Esophagus muscularis mucosa (tissue), 4 donors: ENCODE measurements at regions of chr20 and their contacts with region 1.

Region 1: GRCh38 chr20:41232973-41233926 is 84.3 kb downstream of the ZHX3 start:
- DNase-seq: no peak
- H3K4me3 ChIP-seq: no peak overlapping the region
- H3K27ac ChIP-seq: peak overlapping the region; percentile 71 to 77 (median 74)
- H3K4me1 ChIP-seq: peaks cover 52 to 66% (median 53%) of the 10 kb centered on the region in 4 donors
- H3K27me3 ChIP-seq: no peaks in the 10 kb centered on the region
- CTCF ChIP-seq: no peak
- EP300 ChIP-seq: no peak
- POLR2A ChIP-seq: no peak

Region 2: GRCh38 chr20:41173161-41173721 is 60.0 kb before region 1 on chr20:
- intact Hi-C with region 1: loop called (anchors 2 kb)
- DNase-seq: peak; percentile 98
- H3K4me3 ChIP-seq: no peak overlapping the region
- H3K27ac ChIP-seq: peak overlapping the region; percentile 77 to 85 (median 81)
- H3K4me1 ChIP-seq: peaks cover 68 to 74% (median 70%) of the 10 kb centered on the region in 4 donors
- H3K27me3 ChIP-seq: no peaks in the 10 kb centered on the region
- CTCF ChIP-seq: peak; percentile 98
- EP300 ChIP-seq: no peak
- POLR2A ChIP-seq: no peak

Region 3: GRCh38 chr20:41317536-41318270 is 84.5 kb after region 1 on chr20 and contains the start of gene ZHX3:
- intact Hi-C with region 1: loop called (anchors 5 kb)
- DNase-seq: peak; percentile 97
- H3K4me3 ChIP-seq: peak within 1 kb of the TSS; percentile 76 to 89 (median 83)
- H3K27ac ChIP-seq: peak within 1 kb of the TSS; percentile 89 to 97 (median 95)
- H3K4me1 ChIP-seq: peaks cover 24 to 46% (median 43%) of the 10 kb centered on the region in 4 donors
- H3K27me3 ChIP-seq: no peaks in the 10 kb centered on the region
- CTCF ChIP-seq: no peak
- EP300 ChIP-seq: no peak
- POLR2A ChIP-seq: no peak
- total RNA-seq, gene ZHX3: 89.3 to 173 (median 156) TPM